Activated naive CD4-positive, alpha-beta T cell treated with anti-CD3 and anti-CD28 coated beads, Interleukin-2, amount 10 ng/mL, durations not matched to agents 7 days and 5 days (primary cell): ENCODE measurements at regions of chr9 and their contacts with region 1.

Region 1: GRCh38 chr9:133356391-133357091 is at the starts of genes SURF1 and SURF2:
- DNase-seq: peak; percentile 95
- H3K4me3 Mint-ChIP-seq: peak within 1 kb of the TSS; percentile 85
- H3K27ac Mint-ChIP-seq: peak within 1 kb of the TSS; percentile 90
- H3K4me1 Mint-ChIP-seq: peaks cover 36% of the 10 kb centered on the region
- H3K27me3 Mint-ChIP-seq: no peaks in the 10 kb centered on the region

Region 2: GRCh38 chr9:133342069-133342406 is 14.5 kb before region 1 on chr9:
- CTCF ChIA-PET with region 1: interaction called, 10 read pairs
- DNase-seq: no peak
- H3K4me3 Mint-ChIP-seq: no peak overlapping the region
- H3K27ac Mint-ChIP-seq: peak overlapping the region; percentile 55
- H3K4me1 Mint-ChIP-seq: peaks cover 47% of the 10 kb centered on the region
- H3K27me3 Mint-ChIP-seq: no peaks in the 10 kb centered on the region

Region 3: DNA sequence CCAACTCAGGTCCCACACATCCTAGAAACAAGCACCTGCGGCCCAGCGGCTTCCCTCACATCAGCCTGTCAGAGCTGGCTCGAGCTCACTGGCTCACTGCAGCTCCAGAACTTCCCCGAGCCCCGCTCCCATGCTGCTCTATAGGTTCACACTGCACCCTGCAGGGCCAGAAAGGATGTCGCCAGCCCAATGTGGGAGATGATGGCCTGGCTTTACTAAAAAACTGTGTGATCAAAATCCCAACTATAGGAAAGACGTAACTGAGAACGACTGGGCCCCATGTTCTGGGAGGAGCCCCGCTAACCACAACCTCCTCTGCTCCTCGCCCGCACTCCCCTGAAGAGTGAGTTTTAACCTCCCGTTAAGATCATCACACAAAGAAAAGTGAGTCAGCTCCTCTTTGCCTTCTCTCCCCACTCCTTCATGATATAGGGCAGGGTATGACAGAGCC is 14.7 kb after region 1 on chr9:
- CTCF ChIA-PET with region 1: interaction called, 32 read pairs
- DNase-seq: peak; percentile 78
- H3K4me3 Mint-ChIP-seq: peak overlapping the region; percentile 64
- H3K27ac Mint-ChIP-seq: peak overlapping the region; percentile 96
- H3K4me1 Mint-ChIP-seq: peaks cover 67% of the 10 kb centered on the region
- H3K27me3 Mint-ChIP-seq: no peaks in the 10 kb centered on the region

Region 4: DNA sequence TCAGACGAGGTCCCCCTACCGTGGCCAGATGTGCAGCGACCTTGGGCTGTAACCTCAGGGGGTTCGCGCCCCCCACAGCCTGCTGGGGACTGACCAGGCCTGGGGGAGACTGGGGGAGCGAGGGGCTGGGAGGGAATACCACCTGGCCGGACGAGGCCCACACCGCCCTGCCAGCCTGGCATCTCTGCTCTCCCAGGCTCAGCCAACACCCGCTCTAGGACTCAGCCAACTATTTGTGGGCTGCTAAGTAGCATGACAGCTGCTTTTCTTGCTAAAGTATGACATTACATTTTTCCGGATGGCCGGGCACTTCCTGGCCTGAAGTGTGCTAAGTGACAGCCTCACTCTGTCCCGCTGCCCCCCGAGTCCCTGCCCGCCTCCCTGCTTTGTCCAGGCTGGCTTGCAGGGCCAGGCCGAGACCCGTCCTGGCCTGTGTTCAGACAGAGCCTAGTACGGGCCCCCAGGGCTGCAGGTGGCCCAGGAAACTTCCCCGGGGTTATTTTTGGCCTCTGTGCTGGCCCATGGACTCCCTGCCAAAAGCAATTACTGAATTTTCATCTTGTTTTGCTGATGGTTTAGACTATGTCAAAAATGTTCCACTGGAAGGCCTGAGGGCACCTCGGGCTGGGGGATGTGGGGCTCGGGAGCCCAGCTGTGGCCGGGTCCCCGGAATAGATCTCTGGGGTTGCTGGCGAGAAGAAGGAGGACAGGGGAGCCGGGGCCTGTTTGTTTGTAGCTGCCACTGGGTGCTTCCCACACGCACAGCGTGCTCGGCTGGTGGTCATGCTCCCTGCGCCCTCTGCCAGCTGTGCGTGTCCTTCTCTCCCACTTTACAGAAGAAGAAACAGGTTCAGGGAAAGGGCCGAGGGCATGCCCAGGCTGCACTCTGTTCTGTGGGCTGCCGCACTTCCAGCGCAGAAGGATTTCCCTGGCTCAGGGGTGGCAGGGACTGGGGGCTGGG is 135.8 kb after region 1 on chr9:
- CTCF ChIA-PET with region 1: no interaction called
- DNase-seq: no peak
- H3K4me3 Mint-ChIP-seq: no peak overlapping the region
- H3K27ac Mint-ChIP-seq: no peak overlapping the region
- H3K4me1 Mint-ChIP-seq: peaks cover 3% of the 10 kb centered on the region
- H3K27me3 Mint-ChIP-seq: peaks cover 17% of the 10 kb centered on the region